Activated naive CD4-positive, alpha-beta T cell treated with anti-CD3 and anti-CD28 coated beads for 36 hours (primary cell): ENCODE measurements at regions of chr6 and their contacts with region 1.

Region 1: DNA sequence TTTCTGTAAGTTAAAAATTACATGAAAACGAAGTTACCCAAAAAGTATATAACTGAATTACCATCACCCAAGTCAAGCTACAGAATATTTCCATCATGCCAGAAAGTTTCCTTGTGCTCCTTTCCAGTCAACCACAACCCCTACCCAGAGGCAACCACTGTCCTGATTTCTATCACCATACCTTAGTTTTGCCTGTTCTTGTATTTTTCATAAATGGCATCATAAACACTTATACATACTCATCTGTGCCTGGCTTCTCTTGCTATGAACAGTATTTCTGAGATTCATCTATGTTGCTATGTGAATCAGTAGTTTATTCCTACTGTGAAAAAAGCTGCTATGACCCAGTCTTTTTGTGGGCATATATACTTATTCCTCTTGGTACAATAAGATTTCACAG is 7.4 kb downstream of the FKBP5 start:
- DNase-seq: peak; percentile 64
- H3K4me3 Mint-ChIP-seq: peak overlapping the region; percentile 43
- H3K27ac Mint-ChIP-seq: peak overlapping the region; percentile 74
- H3K4me1 Mint-ChIP-seq: peaks cover 68% of the 10 kb centered on the region
- H3K27me3 Mint-ChIP-seq: no peaks in the 10 kb centered on the region

Region 2: GRCh38 chr6:35415065-35415991 is 266.0 kb before region 1 on chr6:
- CTCF ChIA-PET with region 1: no interaction called
- intact Hi-C with region 1: no loop called
- DNase-seq: peak; percentile 51
- H3K4me3 Mint-ChIP-seq: no peak overlapping the region
- H3K27ac Mint-ChIP-seq: peak overlapping the region; percentile 10
- H3K4me1 Mint-ChIP-seq: peaks cover 44% of the 10 kb centered on the region
- H3K27me3 Mint-ChIP-seq: no peaks in the 10 kb centered on the region

Region 3: GRCh38 chr6:35611240-35611639 is 70.1 kb before region 1 on chr6:
- CTCF ChIA-PET with region 1: no interaction called
- intact Hi-C with region 1: no loop called
- DNase-seq: peak; percentile 65
- H3K4me3 Mint-ChIP-seq: no peak overlapping the region
- H3K27ac Mint-ChIP-seq: peak overlapping the region; percentile 62
- H3K4me1 Mint-ChIP-seq: peaks cover 85% of the 10 kb centered on the region
- H3K27me3 Mint-ChIP-seq: no peaks in the 10 kb centered on the region

Region 4: GRCh38 chr6:35719830-35720733 is 38.8 kb after region 1 on chr6:
- CTCF ChIA-PET with region 1: no interaction called
- intact Hi-C with region 1: loop called (anchors 1 kb)
- DNase-seq: peak; percentile 84
- H3K4me3 Mint-ChIP-seq: peak overlapping the region; percentile 80
- H3K27ac Mint-ChIP-seq: peak overlapping the region; percentile 91
- H3K4me1 Mint-ChIP-seq: peaks cover 74% of the 10 kb centered on the region
- H3K27me3 Mint-ChIP-seq: no peaks in the 10 kb centered on the region